Naive thymus-derived CD8-positive, alpha-beta T cell (primary cell): ENCODE measurements at regions of chr11 and their contacts with region 1.

Region 1: DNA sequence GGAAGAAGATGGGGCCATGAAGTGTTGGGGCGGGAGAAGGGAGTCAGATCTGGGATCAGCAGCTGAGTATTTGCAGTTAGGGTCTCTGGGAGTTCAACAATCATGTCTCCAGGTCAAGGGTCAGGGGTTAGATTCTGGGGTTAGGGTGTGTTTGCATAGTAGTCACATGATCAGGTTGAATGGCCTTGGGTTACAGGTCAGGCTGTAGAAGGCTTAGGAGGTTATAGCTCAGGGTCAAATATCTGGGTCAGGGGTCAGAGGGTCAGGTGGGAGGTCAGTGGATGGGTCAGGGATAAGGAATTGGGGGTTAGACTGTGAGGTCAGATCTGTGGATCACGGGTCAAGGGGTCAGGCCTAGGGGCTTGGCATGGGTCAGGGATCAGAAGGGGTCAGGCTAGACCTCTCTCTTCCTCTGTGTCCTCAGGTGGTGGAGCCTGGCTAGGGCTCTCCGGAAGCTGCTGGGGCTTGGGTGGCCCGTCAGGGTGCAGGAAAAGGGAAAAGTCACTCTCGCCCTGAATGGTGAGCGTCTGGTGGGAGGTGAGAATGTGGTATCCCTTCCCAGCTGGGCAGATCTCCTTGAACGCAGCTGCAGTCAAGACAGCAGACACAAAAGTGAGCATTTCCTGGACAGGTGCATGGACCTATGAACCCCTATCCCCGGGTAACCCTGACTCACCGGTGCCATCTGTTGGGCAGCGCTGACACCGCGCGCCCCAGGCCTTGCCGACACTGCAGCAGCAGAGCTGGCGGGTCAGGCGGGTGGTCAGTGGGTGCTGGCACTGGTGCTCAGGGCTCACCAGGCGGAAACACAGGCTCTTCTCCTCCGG is 6.4 kb downstream of the LTBP3 start:
- DNase-seq: peak in 7 of 10 donors; percentile 33 to 77 (median 49)
- ATAC-seq: peak; percentile 25 to 30
- H3K4me3 Mint-ChIP-seq: peak overlapping the region; percentile 16 to 91 (median 63)
- H3K27ac Mint-ChIP-seq: peak overlapping the region; percentile 61 to 93 (median 82)
- H3K4me1 Mint-ChIP-seq: peaks cover 51 to 77% (median 75%) of the 10 kb centered on the region in 4 donors
- H3K27me3 Mint-ChIP-seq: no peaks in the 10 kb centered on the region

Region 2: DNA sequence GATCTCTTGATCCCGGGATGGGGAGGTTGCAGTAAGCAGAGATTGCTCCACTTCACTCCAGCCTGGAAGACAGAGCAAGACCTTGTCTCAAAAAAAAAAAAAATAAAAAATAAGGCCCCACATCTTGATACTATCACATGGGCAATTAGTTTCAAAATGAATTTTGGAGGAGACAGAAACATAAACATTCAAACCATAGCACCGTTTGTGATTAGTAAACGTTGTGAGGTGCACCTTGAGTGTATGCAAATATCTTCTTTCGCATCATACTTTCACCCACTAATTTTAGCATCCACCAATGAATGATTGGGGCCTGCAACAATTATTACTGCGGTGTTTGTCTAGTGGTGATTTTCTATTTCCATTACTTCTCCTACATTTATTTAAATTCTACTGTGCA is 392.8 kb before region 1 on chr11:
- POLR2A ChIA-PET with region 1: no interaction called
- DNase-seq: no peak
- ATAC-seq: no peak
- H3K4me3 Mint-ChIP-seq: no peak overlapping the region
- H3K27ac Mint-ChIP-seq: no peak overlapping the region
- H3K4me1 Mint-ChIP-seq: no peaks in the 10 kb centered on the region
- H3K27me3 Mint-ChIP-seq: no peaks in the 10 kb centered on the region

Region 3: DNA sequence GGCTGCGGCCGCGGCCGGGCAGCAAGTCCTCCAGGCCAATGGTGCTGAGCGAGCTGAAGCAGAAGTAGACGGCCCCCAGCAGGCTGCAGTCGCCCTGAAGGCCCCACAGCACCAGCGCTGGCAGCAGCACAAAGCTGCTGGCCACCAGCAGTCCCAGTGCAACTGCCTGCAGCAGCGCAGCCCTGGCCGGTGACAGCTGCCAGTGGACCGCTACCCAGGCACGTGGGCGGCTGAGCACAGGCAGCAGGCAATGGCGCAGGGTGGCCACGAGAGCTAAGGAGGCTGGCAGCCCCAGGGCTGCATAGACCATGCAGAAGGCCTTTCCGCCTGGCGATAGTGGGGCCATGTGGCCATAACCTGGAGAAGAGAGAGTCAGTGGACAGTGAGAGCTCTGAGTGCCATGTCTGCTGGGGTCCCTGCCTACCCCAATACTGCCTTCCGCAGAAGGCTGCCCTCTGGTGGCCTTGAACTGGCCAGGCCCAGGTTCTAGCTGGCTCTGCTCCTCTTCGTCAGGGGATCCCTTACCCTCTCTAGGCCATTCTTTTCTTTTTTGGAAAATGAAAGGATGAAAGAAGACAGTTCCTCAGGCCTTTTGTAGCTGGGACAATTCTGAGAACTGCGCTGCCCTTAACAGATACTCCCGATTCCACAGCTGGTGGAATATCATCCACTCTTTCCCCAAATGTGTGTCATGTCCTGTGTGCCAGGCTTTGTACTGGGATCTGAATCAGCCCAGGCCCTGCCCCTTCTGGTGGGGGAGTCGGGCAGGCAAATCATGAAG is 41.9 kb after region 1 on chr11:
- POLR2A ChIA-PET with region 1: interaction called, 11 read pairs
- DNase-seq: peak in 8 of 10 donors; percentile 35 to 74 (median 54)
- ATAC-seq: peak; percentile 67 to 80
- H3K4me3 Mint-ChIP-seq: peak overlapping the region in 1 of 10 donors; percentile 15
- H3K27ac Mint-ChIP-seq: peak overlapping the region in 4 of 10 donors; percentile 9 to 75 (median 37)
- H3K4me1 Mint-ChIP-seq: peaks cover 13 to 34% (median 23%) of the 10 kb centered on the region in 4 donors
- H3K27me3 Mint-ChIP-seq: no peaks in the 10 kb centered on the region

Region 4: GRCh38 chr11:65625628-65626342 is 74.0 kb after region 1 on chr11:
- POLR2A ChIA-PET with region 1: no interaction called
- DNase-seq: peak; percentile 40 to 79 (median 54)
- ATAC-seq: peak; percentile 88 to 96
- H3K4me3 Mint-ChIP-seq: no peak overlapping the region
- H3K27ac Mint-ChIP-seq: peak overlapping the region in 6 of 10 donors; percentile 9 to 86 (median 62)
- H3K4me1 Mint-ChIP-seq: peaks cover 8 to 28% (median 10%) of the 10 kb centered on the region in 4 donors
- H3K27me3 Mint-ChIP-seq: no peaks in the 10 kb centered on the region

Region 5: DNA sequence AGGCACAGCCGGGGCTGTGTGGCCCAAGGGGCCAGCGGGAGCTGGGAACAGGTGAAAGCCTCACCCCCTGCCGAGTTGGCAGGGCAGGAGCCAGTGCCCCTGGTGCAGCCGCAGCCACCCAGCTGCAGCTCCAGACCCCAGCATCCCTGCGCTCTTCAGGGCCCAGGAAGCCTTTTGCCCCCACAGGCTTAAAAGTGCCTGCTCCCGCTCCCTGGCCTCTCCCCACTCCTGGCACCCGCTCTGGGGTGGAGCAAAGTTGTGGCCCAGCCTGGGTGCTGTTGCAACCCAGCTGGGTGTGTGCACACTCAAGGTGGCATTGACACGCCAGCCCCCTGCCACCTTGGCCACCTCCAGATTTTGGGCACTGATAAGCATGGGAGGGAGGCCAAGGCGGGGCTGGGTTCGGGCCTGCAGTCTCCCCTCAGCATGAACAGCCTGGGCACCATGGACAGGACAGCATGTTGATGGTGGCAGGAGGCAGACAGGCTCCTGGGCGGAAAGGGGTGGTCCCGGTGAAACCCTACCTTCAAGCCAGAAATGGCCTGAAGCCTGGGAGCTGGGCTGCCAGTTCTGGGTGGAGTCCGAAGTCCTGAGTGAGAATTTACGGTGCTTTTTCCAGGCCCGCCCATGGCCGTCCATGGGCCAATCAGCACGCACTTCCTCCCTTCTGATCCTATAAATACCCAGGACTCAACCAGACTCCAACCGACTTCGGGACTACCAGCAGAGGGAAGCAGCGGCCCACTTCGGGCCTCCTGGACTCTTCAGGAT is 192.3 kb after region 1 on chr11:
- POLR2A ChIA-PET with region 1: no interaction called
- DNase-seq: peak in 1 of 10 donors; percentile 57
- ATAC-seq: no peak
- H3K4me3 Mint-ChIP-seq: no peak overlapping the region
- H3K27ac Mint-ChIP-seq: no peak overlapping the region
- H3K4me1 Mint-ChIP-seq: peaks cover 0 to 1% (median 0%) of the 10 kb centered on the region in 4 donors
- H3K27me3 Mint-ChIP-seq: peaks cover 4 to 11% (median 10%) of the 10 kb centered on the region in 5 donors